H1 (cell line): ENCODE measurements at regions of chr15 and their contacts with region 1.

Region 1: GRCh38 chr15:80455668-80456442 is 51.7 kb downstream of the ARNT2 start:
- DNase-seq: peak in 1 of 2 experiments; percentile 61
- H3K4me3 ChIP-seq: no peak overlapping the region
- H3K27ac ChIP-seq: no peak overlapping the region
- H3K4me1 ChIP-seq: peaks cover 0 to 9% (median 4%) of the 10 kb centered on the region in 4 experiments; a peak in 4 of 7 replicates
- H3K27me3 ChIP-seq: peaks cover 0 to 2% (median 0%) of the 10 kb centered on the region in 4 experiments; a peak in 1 of 7 replicates
- CTCF ChIP-seq: peak; percentile 90 to 94 (median 91)
- EP300 ChIP-seq: no peak
- POLR2A ChIP-seq: no peak
- RAD21 ChIP-seq: peak; percentile 97

Region 2: GRCh38 chr15:80026754-80027153 is 429.1 kb before region 1 on chr15:
- CTCF ChIA-PET with region 1: no interaction called
- POLR2A ChIA-PET with region 1: no interaction called
- DNase-seq: no peak
- H3K4me3 ChIP-seq: no peak overlapping the region
- H3K27ac ChIP-seq: no peak overlapping the region
- H3K4me1 ChIP-seq: peaks cover 0 to 10% (median 4%) of the 10 kb centered on the region in 4 experiments; a peak in 6 of 7 replicates
- H3K27me3 ChIP-seq: no peaks in the 10 kb centered on the region
- CTCF ChIP-seq: no peak
- EP300 ChIP-seq: no peak
- POLR2A ChIP-seq: no peak
- RAD21 ChIP-seq: no peak

Region 3: GRCh38 chr15:80418892-80419537 is 36.8 kb before region 1 on chr15:
- CTCF ChIA-PET with region 1: interaction called, 10 read pairs
- POLR2A ChIA-PET with region 1: no interaction called
- DNase-seq: no peak
- H3K4me3 ChIP-seq: no peak overlapping the region
- H3K27ac ChIP-seq: no peak overlapping the region
- H3K4me1 ChIP-seq: no peaks in the 10 kb centered on the region; a peak in 1 of 7 replicates
- H3K27me3 ChIP-seq: no peaks in the 10 kb centered on the region
- CTCF ChIP-seq: peak; percentile 38 to 85 (median 65)
- EP300 ChIP-seq: no peak
- POLR2A ChIP-seq: no peak
- RAD21 ChIP-seq: peak; percentile 37 to 60; a peak in 3 of 4 replicates

Region 4: GRCh38 chr15:80512726-80513660 is 57.1 kb after region 1 on chr15:
- CTCF ChIA-PET with region 1: interaction called, 21 read pairs
- POLR2A ChIA-PET with region 1: no interaction called
- DNase-seq: peak in 1 of 2 experiments; percentile 39
- H3K4me3 ChIP-seq: no peak overlapping the region
- H3K27ac ChIP-seq: no peak overlapping the region
- H3K4me1 ChIP-seq: no peaks in the 10 kb centered on the region; a peak in 1 of 7 replicates
- H3K27me3 ChIP-seq: no peaks in the 10 kb centered on the region
- CTCF ChIP-seq: peak in 2 of 3 experiments; percentile 37 to 46; a peak in 3 of 4 replicates
- EP300 ChIP-seq: no peak
- POLR2A ChIP-seq: no peak
- RAD21 ChIP-seq: peak; percentile 52 to 65

Region 5: GRCh38 chr15:80580106-80580505 is 124.3 kb after region 1 on chr15:
- CTCF ChIA-PET with region 1: interaction called, 12 read pairs
- POLR2A ChIA-PET with region 1: no interaction called
- DNase-seq: no peak
- H3K4me3 ChIP-seq: no peak overlapping the region
- H3K27ac ChIP-seq: no peak overlapping the region; the same call in 1 of the 2 replicates
- H3K4me1 ChIP-seq: no peaks in the 10 kb centered on the region; a peak in 1 of 7 replicates
- H3K27me3 ChIP-seq: no peaks in the 10 kb centered on the region
- CTCF ChIP-seq: no peak
- EP300 ChIP-seq: no peak
- POLR2A ChIP-seq: no peak
- RAD21 ChIP-seq: no peak

Region 6: DNA sequence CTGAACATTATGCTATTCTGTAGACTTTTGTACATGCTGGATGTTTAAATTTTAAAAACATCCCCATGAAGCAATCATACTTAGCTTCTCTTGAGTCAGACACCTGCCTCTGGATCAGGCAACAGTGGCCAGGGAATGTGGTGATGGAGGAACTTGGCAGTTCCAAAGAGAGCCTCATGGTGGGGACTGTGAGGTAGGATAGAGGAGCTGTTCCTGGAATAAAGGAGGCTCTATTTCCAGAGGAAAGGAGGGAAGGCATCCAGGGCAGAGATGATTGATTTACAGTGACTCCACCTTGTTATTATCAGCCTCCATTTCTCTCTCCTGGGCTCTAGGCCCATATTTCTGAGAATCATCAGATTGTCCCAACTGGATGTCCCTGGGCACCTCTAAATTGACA is 204.3 kb after region 1 on chr15:
- CTCF ChIA-PET with region 1: interaction called, 22 read pairs
- POLR2A ChIA-PET with region 1: no interaction called
- DNase-seq: peak in 1 of 2 experiments; percentile 52
- H3K4me3 ChIP-seq: no peak overlapping the region
- H3K27ac ChIP-seq: no peak overlapping the region
- H3K4me1 ChIP-seq: no peaks in the 10 kb centered on the region
- H3K27me3 ChIP-seq: no peaks in the 10 kb centered on the region; a peak in 1 of 7 replicates
- CTCF ChIP-seq: peak; percentile 57 to 81 (median 75)
- EP300 ChIP-seq: no peak
- POLR2A ChIP-seq: no peak
- RAD21 ChIP-seq: peak; percentile 83 to 86

Region 7: GRCh38 chr15:80706161-80706560 is 250.3 kb after region 1 on chr15:
- CTCF ChIA-PET with region 1: no interaction called
- POLR2A ChIA-PET with region 1: no interaction called
- DNase-seq: no peak
- H3K4me3 ChIP-seq: peak overlapping the region in 1 of 4 experiments; percentile 20; a peak in 1 of 8 replicates
- H3K27ac ChIP-seq: no peak overlapping the region
- H3K4me1 ChIP-seq: peaks cover 0 to 10% (median 7%) of the 10 kb centered on the region in 4 experiments; a peak in 4 of 7 replicates
- H3K27me3 ChIP-seq: no peaks in the 10 kb centered on the region
- CTCF ChIP-seq: no peak
- EP300 ChIP-seq: no peak
- POLR2A ChIP-seq: no peak
- RAD21 ChIP-seq: no peak